Endothelial cell of umbilical vein (primary cell): ENCODE measurements at regions of chr1 and their contacts with region 1.

Region 1: GRCh38 chr1:109790735-109791494 is 27.2 kb upstream of the EPS8L3 start:
- DNase-seq: peak; percentile 90
- H3K4me3 ChIP-seq: no peak overlapping the region
- H3K27ac ChIP-seq: peak overlapping the region; percentile 52
- H3K4me1 ChIP-seq: peaks cover 38% of the 10 kb centered on the region
- H3K27me3 ChIP-seq: no peaks in the 10 kb centered on the region
- CTCF ChIP-seq: peak; percentile 83 to 88
- POLR2A ChIP-seq: no peak

Region 2: GRCh38 chr1:109704173-109704572 is 86.7 kb before region 1 on chr1:
- CTCF ChIA-PET with region 1: no interaction called
- POLR2A ChIA-PET with region 1: no interaction called
- dilution Hi-C with region 1: no loop called
- intact Hi-C with region 1: no loop called
- DNase-seq: peak; percentile 0
- H3K4me3 ChIP-seq: no peak overlapping the region
- H3K27ac ChIP-seq: no peak overlapping the region
- H3K4me1 ChIP-seq: no peaks in the 10 kb centered on the region
- H3K27me3 ChIP-seq: peaks cover 0 to 4% of the 10 kb centered on the region in 2 experiments
- CTCF ChIP-seq: no peak
- POLR2A ChIP-seq: no peak

Region 3: DNA sequence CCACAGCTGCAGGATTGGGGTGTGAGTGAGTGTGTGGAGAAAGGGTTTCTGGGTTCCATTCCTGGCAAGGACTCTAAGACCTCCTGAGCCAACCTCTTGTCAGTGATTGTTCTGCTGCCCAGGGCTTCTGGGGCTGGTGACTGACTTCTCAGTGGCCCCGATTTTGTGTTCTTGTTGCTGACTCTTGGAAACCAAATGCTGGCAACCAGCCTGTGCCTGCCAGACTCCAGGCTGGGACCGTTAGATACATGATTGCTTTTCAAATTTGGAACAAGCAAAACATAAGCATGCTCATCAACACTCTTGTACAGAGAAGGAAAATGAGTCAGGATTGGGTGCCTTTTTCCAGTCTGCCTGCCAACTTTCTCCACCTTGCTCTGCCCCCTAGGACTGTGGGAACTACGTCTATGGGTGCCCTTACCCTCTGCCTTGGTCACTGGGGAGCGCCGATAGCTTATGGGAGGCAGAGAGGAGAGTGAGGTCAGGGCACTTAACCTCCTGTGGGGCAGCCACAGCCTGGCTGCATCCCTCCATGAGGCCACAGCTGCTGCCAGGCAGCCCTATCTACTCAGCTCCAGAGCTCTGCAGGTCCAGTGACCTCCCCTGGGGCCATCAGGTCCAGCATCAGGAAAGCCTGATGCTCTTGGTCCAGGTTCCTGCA is 12.1 kb after region 1 on chr1:
- CTCF ChIA-PET with region 1: interaction called, 26 read pairs
- POLR2A ChIA-PET with region 1: no interaction called
- dilution Hi-C with region 1: no loop called
- intact Hi-C with region 1: no loop called
- DNase-seq: peak; percentile 29
- H3K4me3 ChIP-seq: no peak overlapping the region
- H3K27ac ChIP-seq: no peak overlapping the region
- H3K4me1 ChIP-seq: no peaks in the 10 kb centered on the region
- H3K27me3 ChIP-seq: peaks cover 0 to 2% of the 10 kb centered on the region in 2 experiments
- CTCF ChIP-seq: no peak
- POLR2A ChIP-seq: no peak

Region 4: DNA sequence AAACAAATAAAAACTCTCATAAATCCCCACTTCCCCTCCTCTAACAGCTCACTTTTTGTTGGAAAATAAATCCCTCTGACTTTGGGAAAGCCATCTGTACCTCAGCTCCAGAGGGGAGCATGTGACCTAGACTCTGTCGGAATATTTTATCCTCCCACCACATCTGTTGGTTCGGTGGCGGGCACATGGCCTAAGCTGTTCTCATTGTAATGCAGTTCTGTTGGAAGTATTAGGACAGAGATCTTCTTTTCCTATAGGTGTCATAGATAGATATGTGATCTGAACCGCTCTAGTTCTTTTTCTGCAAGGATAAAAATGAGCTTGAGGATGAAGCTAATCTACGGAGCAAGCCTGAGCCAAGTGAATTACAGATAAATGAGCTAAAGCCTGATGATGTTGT is 23.3 kb after region 1 on chr1:
- CTCF ChIA-PET with region 1: no interaction called
- POLR2A ChIA-PET with region 1: no interaction called
- dilution Hi-C with region 1: no loop called
- intact Hi-C with region 1: no loop called
- DNase-seq: no peak
- H3K4me3 ChIP-seq: no peak overlapping the region
- H3K27ac ChIP-seq: no peak overlapping the region
- H3K4me1 ChIP-seq: no peaks in the 10 kb centered on the region
- H3K27me3 ChIP-seq: peaks cover 4% of the 10 kb centered on the region in 2 experiments
- CTCF ChIP-seq: no peak
- POLR2A ChIP-seq: no peak

Region 5: GRCh38 chr1:109877320-109877771 is 86.4 kb after region 1 on chr1:
- CTCF ChIA-PET with region 1: interaction called, 3 read pairs
- POLR2A ChIA-PET with region 1: no interaction called
- dilution Hi-C with region 1: no loop called
- intact Hi-C with region 1: loop called (anchors 2 kb)
- DNase-seq: peak; percentile 56
- H3K4me3 ChIP-seq: no peak overlapping the region
- H3K27ac ChIP-seq: no peak overlapping the region
- H3K4me1 ChIP-seq: peaks cover 8% of the 10 kb centered on the region
- H3K27me3 ChIP-seq: peaks cover 7 to 15% of the 10 kb centered on the region in 2 experiments
- CTCF ChIP-seq: peak in 1 of 2 donors; percentile 25
- POLR2A ChIP-seq: no peak

Region 6: GRCh38 chr1:109910123-109910962 is 119.4 kb after region 1 on chr1 and contains the start of gene CSF1:
- CTCF ChIA-PET with region 1: interaction called, 8 read pairs
- POLR2A ChIA-PET with region 1: no interaction called
- dilution Hi-C with region 1: no loop called
- intact Hi-C with region 1: loop called (anchors 1 kb)
- DNase-seq: peak; percentile 77
- H3K4me3 ChIP-seq: peak within 1 kb of the TSS; percentile 36 to 91 (median 45)
- H3K27ac ChIP-seq: peak within 1 kb of the TSS; percentile 45
- H3K4me1 ChIP-seq: peaks cover 8% of the 10 kb centered on the region
- H3K27me3 ChIP-seq: peaks cover 0 to 4% of the 10 kb centered on the region in 2 experiments
- CTCF ChIP-seq: no peak
- POLR2A ChIP-seq: no peak
- total RNA-seq, gene CSF1: 22.7 and 28.9 TPM in 2 replicates

Region 7: GRCh38 chr1:109931189-109931731 is 140.3 kb after region 1 on chr1:
- CTCF ChIA-PET with region 1: interaction called, 8 read pairs
- POLR2A ChIA-PET with region 1: no interaction called
- dilution Hi-C with region 1: no loop called
- intact Hi-C with region 1: loop called (anchors 5 kb)
- DNase-seq: peak; percentile 90
- H3K4me3 ChIP-seq: no peak overlapping the region
- H3K27ac ChIP-seq: no peak overlapping the region
- H3K4me1 ChIP-seq: peaks cover 11% of the 10 kb centered on the region
- H3K27me3 ChIP-seq: no peaks in the 10 kb centered on the region
- CTCF ChIP-seq: no peak
- POLR2A ChIP-seq: no peak

Region 8: GRCh38 chr1:110060034-110060661 is 269.2 kb after region 1 on chr1:
- CTCF ChIA-PET with region 1: no interaction called
- POLR2A ChIA-PET with region 1: no interaction called
- dilution Hi-C with region 1: no loop called
- intact Hi-C with region 1: no loop called
- DNase-seq: peak; percentile 22
- H3K4me3 ChIP-seq: no peak overlapping the region
- H3K27ac ChIP-seq: no peak overlapping the region
- H3K4me1 ChIP-seq: no peaks in the 10 kb centered on the region
- H3K27me3 ChIP-seq: no peaks in the 10 kb centered on the region
- CTCF ChIP-seq: peak; percentile 72 to 92
- POLR2A ChIP-seq: no peak